Right cardiac atrium (tissue), 5 donors: ENCODE measurements at regions of chr13 and their contacts with region 1.

Region 1: DNA sequence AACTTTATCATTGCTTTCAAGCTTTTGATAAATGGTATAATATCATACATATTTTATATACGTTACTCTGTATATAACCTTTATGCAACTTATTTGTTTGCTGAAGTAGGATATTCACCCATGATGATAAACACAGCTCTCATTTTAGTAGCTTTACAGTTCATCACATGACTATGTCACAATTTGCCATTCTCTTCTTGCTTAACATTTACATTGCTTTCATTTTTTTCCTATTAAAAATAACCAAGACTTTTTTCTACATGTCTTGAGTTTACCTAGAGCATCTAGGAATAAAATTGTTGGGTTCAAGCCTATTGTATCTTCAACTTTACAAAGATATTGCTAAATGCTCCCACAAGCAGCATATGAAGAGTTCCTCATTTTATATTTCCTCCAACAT is 54.0 kb downstream of the KCNRG start:
- DNase-seq: no peak
- ATAC-seq: no peak
- H3K4me3 ChIP-seq: no peak overlapping the region
- H3K27ac ChIP-seq: no peak overlapping the region
- H3K4me1 ChIP-seq: no peaks in the 10 kb centered on the region
- H3K27me3 ChIP-seq: no peaks in the 10 kb centered on the region

Region 2: DNA sequence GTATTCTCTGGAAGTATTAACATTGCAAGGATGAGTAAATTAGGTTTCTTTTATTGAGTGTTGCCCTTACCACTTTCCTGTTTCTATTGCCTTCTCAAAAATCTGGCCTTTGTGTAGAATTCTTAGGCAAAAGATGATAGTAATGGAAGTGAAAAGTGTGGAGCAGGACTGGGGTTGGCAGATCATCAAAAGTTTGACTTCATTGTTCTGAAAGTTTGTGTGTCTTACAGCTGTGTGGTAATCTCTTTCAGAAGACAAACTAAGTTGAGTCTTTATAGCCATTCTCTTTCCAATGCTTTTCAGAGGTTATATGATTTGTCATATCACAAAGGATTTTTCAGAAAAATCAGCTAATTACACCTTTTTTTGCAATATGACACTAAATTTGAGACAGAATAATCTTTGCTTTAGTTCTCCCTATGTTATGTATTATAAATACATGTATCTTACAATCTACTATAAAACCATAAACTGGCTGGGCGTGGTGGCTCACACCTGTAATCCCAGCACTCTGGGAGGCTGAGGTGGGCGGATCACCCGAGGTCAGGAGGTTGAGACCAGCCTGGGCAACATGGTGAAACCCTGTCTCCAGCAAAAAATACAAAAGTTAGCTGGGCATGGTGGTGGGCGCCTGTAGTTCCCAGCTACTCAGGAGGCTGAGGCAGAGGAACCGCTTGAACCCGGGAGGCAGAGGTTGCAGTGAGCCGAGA is 62.7 kb before region 1 on chr13:
- intact Hi-C with region 1: loop called in 1 of 4 experiments (anchors 10 kb)
- DNase-seq: no peak
- ATAC-seq: no peak
- H3K4me3 ChIP-seq: no peak overlapping the region
- H3K27ac ChIP-seq: no peak overlapping the region
- H3K4me1 ChIP-seq: no peaks in the 10 kb centered on the region
- H3K27me3 ChIP-seq: no peaks in the 10 kb centered on the region